ENCODE measurements at regions of chr11 and their contacts with region 1.

Region 1: GRCh38 chr11:3849297-3849874 is 6.1 kb upstream of the STIM1 start:
- DNase-seq: no peak
- ATAC-seq: peak; percentile 62
- H3K4me3 Mint-ChIP-seq: no peak overlapping the region
- H3K27ac Mint-ChIP-seq: no peak overlapping the region
- H3K4me1 Mint-ChIP-seq: peaks cover 22% of the 10 kb centered on the region
- H3K27me3 Mint-ChIP-seq: no peaks in the 10 kb centered on the region
- CTCF ChIP-seq: no peak

Region 2: DNA sequence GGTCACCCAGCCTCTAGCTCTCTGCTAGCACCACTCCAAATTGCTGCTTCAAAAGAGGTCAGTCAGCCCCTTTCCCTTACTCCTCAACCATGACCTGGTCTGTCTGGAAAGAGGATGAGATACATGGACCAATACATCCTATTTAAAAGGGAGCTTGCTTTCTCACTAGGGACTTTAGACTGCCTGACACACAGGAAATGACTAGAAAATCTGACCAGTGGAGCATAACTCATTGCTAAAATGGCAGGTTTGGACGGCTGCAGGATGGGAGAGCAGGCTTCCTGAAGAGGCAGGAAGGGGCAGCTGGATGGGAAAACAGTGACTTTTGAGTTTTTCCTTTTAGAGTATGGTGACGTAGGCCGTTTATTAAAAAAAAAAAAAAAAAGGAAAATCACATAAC is 31.3 kb after region 1 on chr11:
- CTCF ChIA-PET with region 1: interaction called, 22 read pairs
- POLR2A ChIA-PET with region 1: interaction called, 43 read pairs
- intact Hi-C with region 1: no loop called
- DNase-seq: no peak
- ATAC-seq: peak; percentile 80
- H3K4me3 Mint-ChIP-seq: peak overlapping the region; percentile 60
- H3K27ac Mint-ChIP-seq: peak overlapping the region; percentile 87
- H3K4me1 Mint-ChIP-seq: peaks cover 85% of the 10 kb centered on the region
- H3K27me3 Mint-ChIP-seq: no peaks in the 10 kb centered on the region
- CTCF ChIP-seq: no peak

Region 3: GRCh38 chr11:3929649-3930048 is 80.3 kb after region 1 on chr11:
- CTCF ChIA-PET with region 1: interaction called, 28 read pairs
- POLR2A ChIA-PET with region 1: interaction called, 29 read pairs
- intact Hi-C with region 1: loop called (anchors 1 kb)
- DNase-seq: no peak
- ATAC-seq: no peak
- H3K4me3 Mint-ChIP-seq: no peak overlapping the region
- H3K27ac Mint-ChIP-seq: no peak overlapping the region
- H3K4me1 Mint-ChIP-seq: peaks cover 55% of the 10 kb centered on the region
- H3K27me3 Mint-ChIP-seq: no peaks in the 10 kb centered on the region
- CTCF ChIP-seq: no peak

Region 4: GRCh38 chr11:3971756-3972404 is 122.5 kb after region 1 on chr11:
- CTCF ChIA-PET with region 1: interaction called, 15 read pairs
- POLR2A ChIA-PET with region 1: interaction called, 7 read pairs
- intact Hi-C with region 1: loop called (anchors 1 kb)
- DNase-seq: no peak
- ATAC-seq: peak; percentile 60
- H3K4me3 Mint-ChIP-seq: no peak overlapping the region
- H3K27ac Mint-ChIP-seq: no peak overlapping the region
- H3K4me1 Mint-ChIP-seq: peaks cover 11% of the 10 kb centered on the region
- H3K27me3 Mint-ChIP-seq: no peaks in the 10 kb centered on the region
- CTCF ChIP-seq: no peak

Region 5: GRCh38 chr11:4044976-4045646 is 195.7 kb after region 1 on chr11:
- CTCF ChIA-PET with region 1: interaction called, 10 read pairs
- POLR2A ChIA-PET with region 1: interaction called, 3 read pairs
- intact Hi-C with region 1: no loop called
- DNase-seq: no peak
- ATAC-seq: no peak
- H3K4me3 Mint-ChIP-seq: no peak overlapping the region
- H3K27ac Mint-ChIP-seq: no peak overlapping the region
- H3K4me1 Mint-ChIP-seq: peaks cover 8% of the 10 kb centered on the region
- H3K27me3 Mint-ChIP-seq: no peaks in the 10 kb centered on the region
- CTCF ChIP-seq: no peak

Region 6: DNA sequence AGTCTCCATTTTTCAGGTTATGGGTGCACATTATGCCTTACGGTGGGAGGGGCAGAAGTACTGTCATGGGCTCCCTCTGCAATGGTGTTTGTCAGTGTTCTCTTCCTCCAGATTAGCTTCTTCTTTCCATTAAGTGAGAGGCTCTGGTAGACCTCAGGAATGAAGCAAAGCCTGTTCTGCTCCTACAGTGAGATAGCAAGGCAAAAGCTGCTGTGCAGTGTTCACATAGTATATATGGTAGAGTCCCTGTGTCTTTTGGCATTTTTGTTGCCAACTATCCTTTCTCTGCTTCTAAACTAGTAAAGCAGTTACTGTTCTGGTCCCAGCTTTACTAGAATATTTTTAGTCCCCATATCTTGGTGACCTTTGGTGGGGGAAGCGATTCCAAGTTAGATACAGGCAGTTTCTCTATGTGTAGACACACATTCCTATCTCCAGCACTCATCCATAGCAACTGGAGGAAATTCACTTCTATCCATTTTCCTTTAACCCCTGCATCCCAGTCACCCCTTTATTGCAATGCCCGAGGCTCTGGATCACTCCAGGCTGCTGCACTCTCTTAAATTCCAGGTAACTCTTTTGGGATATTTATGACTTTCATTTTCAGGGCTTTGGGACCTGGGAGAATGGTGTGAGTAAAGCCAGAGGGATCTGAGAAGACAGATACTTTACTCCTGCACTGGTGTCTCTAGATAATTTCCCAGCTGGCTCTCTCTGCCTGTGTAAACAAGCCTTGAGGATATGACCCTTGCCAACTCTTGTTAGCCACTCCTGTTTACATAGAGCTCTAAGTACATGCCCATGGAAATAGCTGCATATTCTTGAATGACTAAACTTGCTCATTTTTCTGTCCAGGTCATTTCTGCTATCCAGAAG is 1771.5 kb after region 1 on chr11:
- CTCF ChIA-PET with region 1: no interaction called
- POLR2A ChIA-PET with region 1: no interaction called
- intact Hi-C with region 1: no loop called
- DNase-seq: no peak
- ATAC-seq: no peak
- H3K4me3 Mint-ChIP-seq: no peak overlapping the region
- H3K27ac Mint-ChIP-seq: no peak overlapping the region
- H3K4me1 Mint-ChIP-seq: peaks cover 20% of the 10 kb centered on the region
- H3K27me3 Mint-ChIP-seq: no peaks in the 10 kb centered on the region
- CTCF ChIP-seq: no peak

Region 7: DNA sequence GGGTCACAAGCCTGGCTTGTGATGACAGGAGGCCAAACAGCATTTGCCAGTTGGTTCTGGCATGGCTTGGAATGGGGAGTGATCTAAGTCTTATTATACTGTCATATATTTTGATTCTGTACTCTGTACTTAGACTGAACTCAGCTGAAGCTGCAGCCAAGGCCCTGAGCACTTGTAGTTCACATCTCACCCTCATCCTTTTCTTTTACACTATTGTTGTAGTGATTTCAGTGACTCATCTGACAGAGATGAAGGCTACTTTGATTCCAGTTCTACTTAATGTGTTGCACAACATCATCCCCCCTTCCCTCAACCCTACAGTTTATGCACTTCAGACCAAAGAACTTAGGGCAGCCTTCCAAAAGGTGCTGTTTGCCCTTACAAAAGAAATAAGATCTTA is 1887.7 kb after region 1 on chr11:
- CTCF ChIA-PET with region 1: no interaction called
- POLR2A ChIA-PET with region 1: no interaction called
- intact Hi-C with region 1: no loop called
- DNase-seq: no peak
- ATAC-seq: no peak
- H3K4me3 Mint-ChIP-seq: no peak overlapping the region
- H3K27ac Mint-ChIP-seq: no peak overlapping the region
- H3K4me1 Mint-ChIP-seq: no peaks in the 10 kb centered on the region
- H3K27me3 Mint-ChIP-seq: peaks cover 7% of the 10 kb centered on the region
- CTCF ChIP-seq: no peak